A673 (cell line): ENCODE measurements at regions of chr12 and their contacts with region 1.

Region 1: GRCh38 chr12:70309348-70309747 is 56.7 kb upstream of the KCNMB4 start:
- DNase-seq: no peak
- H3K4me3 ChIP-seq: no peak overlapping the region
- H3K27ac ChIP-seq: no peak overlapping the region
- H3K4me1 ChIP-seq: no peaks in the 10 kb centered on the region
- H3K27me3 ChIP-seq: no peaks in the 10 kb centered on the region
- CTCF ChIP-seq: no peak

Region 2: GRCh38 chr12:69932676-69933552 is 376.4 kb before region 1 on chr12:
- CTCF ChIA-PET with region 1: no interaction called
- POLR2A ChIA-PET with region 1: no interaction called
- intact Hi-C with region 1: no loop called
- DNase-seq: no peak
- H3K4me3 ChIP-seq: no peak overlapping the region
- H3K27ac ChIP-seq: no peak overlapping the region
- H3K4me1 ChIP-seq: no peaks in the 10 kb centered on the region
- H3K27me3 ChIP-seq: peaks cover 4% of the 10 kb centered on the region
- CTCF ChIP-seq: no peak

Region 3: DNA sequence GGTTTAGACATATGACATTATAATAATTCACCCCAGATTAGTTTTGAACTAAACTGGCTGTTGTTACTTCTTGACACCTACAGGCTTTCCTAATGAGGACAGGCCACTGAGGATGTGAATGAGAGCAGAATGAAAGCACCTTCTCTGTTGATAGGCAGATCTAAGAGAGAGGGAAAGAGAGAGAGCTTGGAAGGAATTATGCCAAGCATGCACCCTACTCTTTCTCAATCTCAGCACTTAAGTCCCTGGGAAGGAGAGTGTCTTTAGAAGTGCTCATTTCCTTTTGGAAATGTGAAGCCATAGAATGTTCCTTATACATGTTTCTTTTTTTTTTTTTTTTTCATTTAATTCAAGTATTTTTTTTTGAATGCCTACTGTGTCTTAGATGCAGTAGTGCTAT is 1579.2 kb after region 1 on chr12:
- CTCF ChIA-PET with region 1: interaction called, 13 read pairs
- POLR2A ChIA-PET with region 1: no interaction called
- intact Hi-C with region 1: no loop called
- DNase-seq: peak; percentile 78
- H3K4me3 ChIP-seq: no peak overlapping the region
- H3K27ac ChIP-seq: peak overlapping the region; percentile 74
- H3K4me1 ChIP-seq: peaks cover 72% of the 10 kb centered on the region
- H3K27me3 ChIP-seq: no peaks in the 10 kb centered on the region
- CTCF ChIP-seq: no peak